Activated CD4-positive, alpha-beta memory T cell treated with anti-CD3 and anti-CD28 coated beads, Interleukin-2, amount 10 ng/mL, durations not matched to agents 7 days and 5 days (primary cell): ENCODE measurements at regions of chr11 and their contacts with region 1.

Region 1: GRCh38 chr11:62787005-62787759 is at the start of gene TMEM179B:
- DNase-seq: peak; percentile 98
- H3K4me3 Mint-ChIP-seq: peak within 1 kb of the TSS; percentile 95
- H3K27ac Mint-ChIP-seq: peak within 1 kb of the TSS; percentile 97
- H3K4me1 Mint-ChIP-seq: peaks cover 47% of the 10 kb centered on the region
- H3K27me3 Mint-ChIP-seq: no peaks in the 10 kb centered on the region
- total RNA-seq, gene TMEM179B: 46.9 to 48.2 TPM

Region 2: GRCh38 chr11:62621567-62622470 is 165.4 kb before region 1 on chr11 and contains the start of gene B3GAT3:
- CTCF ChIA-PET with region 1: no interaction called
- POLR2A ChIA-PET with region 1: interaction called, 10 read pairs
- DNase-seq: peak; percentile 97
- H3K4me3 Mint-ChIP-seq: peak within 1 kb of the TSS; percentile 87
- H3K27ac Mint-ChIP-seq: peak within 1 kb of the TSS; percentile 98
- H3K4me1 Mint-ChIP-seq: peaks cover 29% of the 10 kb centered on the region
- H3K27me3 Mint-ChIP-seq: no peaks in the 10 kb centered on the region
- total RNA-seq, gene B3GAT3: 58.9 to 67.1 TPM

Region 3: DNA sequence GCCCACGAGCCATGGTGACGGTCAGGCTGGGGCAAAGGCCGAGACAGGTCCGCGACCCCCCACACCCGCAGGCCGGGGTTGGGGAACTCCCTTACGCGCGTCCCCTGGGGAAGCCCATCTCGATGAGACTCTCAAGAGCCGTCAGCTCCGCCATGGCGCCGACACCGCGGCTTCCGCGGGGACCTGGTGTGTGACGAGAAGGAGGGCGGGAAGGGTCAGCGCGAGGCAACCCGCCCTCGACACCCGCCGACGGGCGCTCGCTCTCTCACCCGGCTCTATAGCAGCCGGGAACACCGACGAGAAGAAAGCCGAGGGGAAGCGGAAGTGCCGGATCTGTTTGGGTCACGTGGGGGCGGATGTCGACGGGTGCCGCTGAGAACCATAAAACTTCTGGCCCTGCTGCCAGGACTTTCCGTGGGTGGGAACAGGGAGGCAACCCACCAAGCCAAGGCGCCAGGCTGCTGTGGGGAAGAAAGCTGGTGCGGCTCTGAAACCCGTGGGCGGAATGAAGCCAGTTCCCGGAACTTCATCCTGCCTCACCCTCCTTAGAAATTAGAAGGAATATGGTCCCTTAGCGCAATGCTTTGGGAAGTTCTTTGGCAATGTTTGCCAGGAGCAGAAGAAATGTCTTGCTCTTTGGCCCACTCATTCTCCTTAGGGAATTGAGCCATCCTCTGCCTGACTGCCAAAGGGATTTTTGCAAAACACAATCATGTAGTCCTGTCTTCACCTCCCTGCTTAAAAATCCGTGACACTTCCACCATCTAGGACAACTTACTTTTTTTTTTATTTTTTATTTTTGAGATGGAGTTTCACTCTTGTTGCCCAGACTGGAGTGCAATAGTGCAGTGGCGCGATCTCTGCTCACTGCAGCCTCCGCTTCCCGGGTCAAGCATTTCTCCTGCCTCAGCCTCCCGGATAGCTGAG is 108.1 kb before region 1 on chr11 and contains the start of gene UBXN1:
- CTCF ChIA-PET with region 1: interaction called, 12 read pairs
- POLR2A ChIA-PET with region 1: interaction called, 6 read pairs
- DNase-seq: peak; percentile 87
- H3K4me3 Mint-ChIP-seq: peak within 1 kb of the TSS; percentile 88
- H3K27ac Mint-ChIP-seq: peak within 1 kb of the TSS; percentile 78
- H3K4me1 Mint-ChIP-seq: peaks cover 40% of the 10 kb centered on the region
- H3K27me3 Mint-ChIP-seq: no peaks in the 10 kb centered on the region
- total RNA-seq, gene UBXN1: 135 to 139 TPM

Region 4: DNA sequence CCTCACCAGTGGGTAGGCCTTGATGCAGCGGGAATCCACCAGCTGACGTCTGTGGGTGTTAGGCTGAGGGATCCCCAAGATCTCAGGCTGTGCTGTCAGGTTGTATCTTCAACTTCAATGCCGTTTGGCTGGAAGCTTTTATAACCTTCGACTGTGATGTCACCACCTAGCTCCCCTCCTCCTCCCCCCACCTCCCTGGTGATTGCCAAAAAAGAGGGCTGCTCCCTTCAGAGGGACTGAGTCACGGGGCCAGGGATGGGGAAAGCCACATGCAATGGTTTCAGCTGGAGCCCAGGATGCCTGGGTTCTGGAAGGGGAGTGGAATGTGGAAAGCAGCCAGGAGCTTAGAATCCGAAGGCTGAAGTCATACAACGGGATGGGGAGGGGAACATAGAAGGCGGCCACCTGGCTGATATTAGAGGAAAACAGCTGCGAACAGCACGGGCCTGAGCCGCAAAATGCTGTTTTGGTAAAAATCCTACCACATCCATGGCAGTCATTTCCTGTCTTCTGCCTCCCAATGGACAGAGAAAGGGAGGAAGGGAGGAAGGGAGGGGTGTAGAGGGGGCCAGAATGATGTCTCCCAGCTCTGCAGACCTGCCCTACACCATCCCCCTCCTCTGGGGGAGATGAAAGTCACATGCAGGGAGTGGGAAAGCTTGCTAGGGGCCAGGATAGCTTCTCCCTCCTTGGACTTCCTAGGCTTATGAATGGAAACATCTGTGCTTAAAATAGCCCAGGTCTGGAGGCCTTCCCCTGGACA is 97.6 kb before region 1 on chr11 and contains the start of gene LRRN4CL:
- CTCF ChIA-PET with region 1: no interaction called
- POLR2A ChIA-PET with region 1: no interaction called
- DNase-seq: no peak
- H3K4me3 Mint-ChIP-seq: no peak within 1 kb of the TSS
- H3K27ac Mint-ChIP-seq: no peak within 1 kb of the TSS
- H3K4me1 Mint-ChIP-seq: peaks cover 3% of the 10 kb centered on the region
- H3K27me3 Mint-ChIP-seq: peaks cover 4% of the 10 kb centered on the region
- total RNA-seq, gene LRRN4CL: 0.18 to 0.20 TPM

Region 5: DNA sequence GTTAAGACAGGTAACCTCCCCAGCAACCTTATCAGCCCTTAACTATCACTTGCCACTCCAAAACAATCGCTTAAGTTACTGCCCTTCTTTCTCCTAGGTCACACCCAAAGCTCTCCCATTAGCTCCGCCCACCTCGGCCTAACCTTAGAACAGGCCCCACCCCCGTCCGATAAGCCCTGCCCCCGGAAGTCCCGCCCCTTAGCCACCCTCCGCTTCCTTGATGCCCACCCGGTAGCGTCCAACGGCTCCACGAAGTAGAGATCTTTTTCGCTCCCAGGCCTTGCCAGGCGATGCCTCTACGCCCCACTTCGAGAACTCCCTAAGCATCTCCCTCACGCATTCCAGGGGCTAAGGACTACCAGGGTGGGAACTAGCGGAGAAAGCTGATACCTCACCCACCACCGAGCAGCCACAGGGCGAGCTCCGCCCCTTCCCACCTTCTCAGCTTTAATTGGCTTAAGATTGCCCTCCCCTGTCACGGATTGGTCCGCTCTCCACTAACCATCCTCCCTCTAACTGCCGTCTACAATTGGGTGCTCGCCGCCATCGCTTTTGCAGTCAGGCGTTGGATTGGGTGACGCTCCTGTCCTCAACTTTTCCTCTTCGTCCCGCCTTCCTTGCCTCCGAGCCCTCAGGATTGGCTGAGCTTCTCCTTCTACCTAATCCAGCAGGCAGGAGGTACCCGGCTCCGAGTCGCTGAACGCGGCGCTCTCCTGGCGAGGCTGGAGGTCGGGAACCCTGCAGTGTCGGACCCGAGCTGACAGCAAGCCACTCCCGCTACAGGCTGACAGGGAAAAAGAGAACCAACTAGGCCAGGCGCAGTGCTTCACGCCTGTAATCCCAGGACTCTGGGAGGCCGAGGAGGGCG is 33.2 kb before region 1 on chr11 and contains the start of gene ZBTB3:
- CTCF ChIA-PET with region 1: interaction called, 30 read pairs
- POLR2A ChIA-PET with region 1: interaction called, 45 read pairs
- DNase-seq: peak; percentile 97
- H3K4me3 Mint-ChIP-seq: peak within 1 kb of the TSS; percentile 95
- H3K27ac Mint-ChIP-seq: peak within 1 kb of the TSS; percentile 93
- H3K4me1 Mint-ChIP-seq: peaks cover 33% of the 10 kb centered on the region
- H3K27me3 Mint-ChIP-seq: no peaks in the 10 kb centered on the region
- total RNA-seq, gene ZBTB3: 13.3 to 13.4 TPM

Region 6: GRCh38 chr11:62799486-62799885 is 12.3 kb after region 1 on chr11:
- CTCF ChIA-PET with region 1: interaction called, 6 read pairs
- POLR2A ChIA-PET with region 1: interaction called, 134 read pairs
- DNase-seq: no peak
- H3K4me3 Mint-ChIP-seq: no peak overlapping the region
- H3K27ac Mint-ChIP-seq: no peak overlapping the region
- H3K4me1 Mint-ChIP-seq: peaks cover 30% of the 10 kb centered on the region
- H3K27me3 Mint-ChIP-seq: no peaks in the 10 kb centered on the region

Region 7: DNA sequence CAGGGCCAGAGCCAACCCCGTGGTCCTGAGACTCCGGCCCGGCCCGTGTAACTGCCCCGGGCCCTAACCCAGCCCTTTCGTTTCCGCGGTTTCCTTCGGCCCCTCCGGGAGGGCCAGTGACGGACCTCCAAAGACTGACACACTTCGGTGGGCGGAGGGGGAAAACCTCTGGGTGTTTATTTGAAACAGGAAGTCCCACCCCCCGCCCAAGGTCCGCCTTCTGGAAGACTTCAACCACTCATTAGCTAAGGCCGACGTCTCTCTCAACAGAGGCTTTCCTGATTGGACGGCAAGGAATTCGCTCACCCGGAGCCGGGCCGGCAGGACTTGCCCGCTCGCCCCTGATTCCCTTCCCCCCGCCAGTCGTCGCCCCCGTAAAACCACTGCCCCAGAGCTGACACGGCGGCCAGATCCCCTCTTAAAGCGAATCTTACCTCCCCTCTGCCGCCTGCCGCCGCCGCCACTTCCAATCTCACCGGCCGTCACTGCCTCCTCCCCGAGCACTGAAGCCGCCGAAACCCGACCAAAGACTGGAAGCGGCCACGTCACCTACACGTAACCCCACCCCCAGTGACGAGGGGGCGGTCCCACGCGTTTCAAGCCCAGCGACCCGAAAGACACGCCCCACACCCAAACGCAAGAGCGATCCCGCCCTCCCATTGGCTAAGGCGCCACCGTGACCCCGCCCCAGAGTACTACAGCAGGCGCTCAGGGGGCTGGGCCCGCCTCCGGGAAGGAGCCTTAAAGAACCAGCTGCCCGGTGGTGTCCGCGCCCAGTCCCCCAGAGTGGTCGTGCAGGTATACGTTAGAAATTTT is 44.5 kb after region 1 on chr11 and contains the start of gene STX5:
- CTCF ChIA-PET with region 1: interaction called, 21 read pairs
- POLR2A ChIA-PET with region 1: interaction called, 48 read pairs
- DNase-seq: peak; percentile 100
- H3K4me3 Mint-ChIP-seq: peak within 1 kb of the TSS; percentile 84
- H3K27ac Mint-ChIP-seq: peak within 1 kb of the TSS; percentile 91
- H3K4me1 Mint-ChIP-seq: peaks cover 33% of the 10 kb centered on the region
- H3K27me3 Mint-ChIP-seq: no peaks in the 10 kb centered on the region
- total RNA-seq, gene STX5: 40.6 to 41.6 TPM

Region 8: GRCh38 chr11:62880803-62881578 is 93.8 kb after region 1 on chr11 and contains the start of gene SLC3A2:
- CTCF ChIA-PET with region 1: interaction called, 37 read pairs
- POLR2A ChIA-PET with region 1: interaction called, 60 read pairs
- DNase-seq: peak; percentile 92
- H3K4me3 Mint-ChIP-seq: peak within 1 kb of the TSS; percentile 99
- H3K27ac Mint-ChIP-seq: peak within 1 kb of the TSS; percentile 100
- H3K4me1 Mint-ChIP-seq: peaks cover 51% of the 10 kb centered on the region
- H3K27me3 Mint-ChIP-seq: no peaks in the 10 kb centered on the region
- total RNA-seq, gene SLC3A2: 262 to 279 TPM